Sigmoid colon (tissue), 7 donors: ENCODE measurements at regions of chr2 and their contacts with region 1.

Region 1: GRCh38 chr2:66699793-66700676 is 265.1 kb downstream of the MEIS1 start:
- DNase-seq: no peak
- H3K4me3 ChIP-seq: no peak overlapping the region
- H3K27ac ChIP-seq: peak overlapping the region; percentile 76 to 91 (median 85)
- H3K4me1 ChIP-seq: peaks cover 3 to 74% (median 65%) of the 10 kb centered on the region in 4 donors
- H3K27me3 ChIP-seq: no peaks in the 10 kb centered on the region
- CTCF ChIP-seq: no peak
- EP300 ChIP-seq: no peak
- POLR2A ChIP-seq: no peak

Region 2: DNA sequence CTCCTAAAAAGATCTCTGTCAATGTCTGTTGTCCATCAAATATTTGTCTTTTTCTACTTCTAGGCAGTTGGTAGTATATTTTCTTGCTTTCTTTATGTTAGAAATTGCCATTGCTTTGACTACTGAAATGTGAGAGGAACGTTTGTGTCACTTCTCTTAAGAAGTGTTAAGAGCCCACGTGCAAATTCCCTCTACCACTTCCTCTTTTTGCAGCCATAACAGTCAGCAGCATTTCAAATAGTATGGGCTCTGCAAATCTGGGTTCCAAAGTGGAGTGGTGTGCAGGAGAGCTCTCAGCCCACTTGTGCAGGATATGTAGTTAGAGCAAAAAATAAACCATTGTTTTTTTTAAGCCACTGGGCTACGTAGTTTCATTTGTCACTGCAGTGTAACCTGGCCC is 48.9 kb after region 1 on chr2:
- intact Hi-C with region 1: loop called (anchors 5 kb)
- DNase-seq: no peak
- H3K4me3 ChIP-seq: no peak overlapping the region
- H3K27ac ChIP-seq: peak overlapping the region in 3 of 4 donors; percentile 62 to 80 (median 69)
- H3K4me1 ChIP-seq: peaks cover 0 to 56% (median 27%) of the 10 kb centered on the region in 4 donors
- H3K27me3 ChIP-seq: no peaks in the 10 kb centered on the region
- CTCF ChIP-seq: no peak
- EP300 ChIP-seq: no peak
- POLR2A ChIP-seq: no peak

Region 3: GRCh38 chr2:66790651-66791181 is 90.7 kb after region 1 on chr2:
- intact Hi-C with region 1: loop called (anchors 5 kb)
- DNase-seq: peak; percentile 76
- H3K4me3 ChIP-seq: no peak overlapping the region
- H3K27ac ChIP-seq: peak overlapping the region; percentile 44 to 77 (median 68)
- H3K4me1 ChIP-seq: peaks cover 0 to 63% (median 49%) of the 10 kb centered on the region in 4 donors
- H3K27me3 ChIP-seq: no peaks in the 10 kb centered on the region
- CTCF ChIP-seq: no peak
- EP300 ChIP-seq: peak in 1 of 4 donors; percentile 19
- POLR2A ChIP-seq: no peak

Region 4: GRCh38 chr2:66851449-66851872 is 151.4 kb after region 1 on chr2:
- intact Hi-C with region 1: loop called (anchors 5 kb)
- DNase-seq: peak; percentile 81
- H3K4me3 ChIP-seq: no peak overlapping the region
- H3K27ac ChIP-seq: peak overlapping the region in 3 of 4 donors; percentile 87 to 91 (median 89)
- H3K4me1 ChIP-seq: peaks cover 0 to 64% (median 58%) of the 10 kb centered on the region in 4 donors
- H3K27me3 ChIP-seq: no peaks in the 10 kb centered on the region
- CTCF ChIP-seq: no peak
- EP300 ChIP-seq: peak in 1 of 4 donors; percentile 50
- POLR2A ChIP-seq: no peak

Region 5: DNA sequence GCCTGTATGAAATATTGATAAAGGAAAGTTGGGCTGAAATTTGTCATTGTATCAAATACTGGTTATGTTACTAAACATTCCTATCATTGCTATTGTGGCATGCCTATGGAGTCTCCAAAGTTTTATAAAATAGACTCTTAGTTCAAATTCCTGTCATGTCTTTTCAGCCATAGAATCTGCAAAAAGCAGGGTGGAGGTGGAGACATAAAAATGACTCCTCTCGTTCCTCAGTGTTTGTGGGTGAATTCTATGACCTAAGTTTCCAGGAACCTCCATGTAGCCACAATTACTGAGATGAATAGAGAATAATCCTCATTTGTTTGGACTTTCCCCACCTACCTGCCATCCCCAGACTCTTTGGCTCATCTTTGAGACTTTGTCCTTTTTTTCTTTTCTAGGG is 370.8 kb after region 1 on chr2:
- intact Hi-C with region 1: loop called (anchors 10 kb)
- DNase-seq: no peak
- H3K4me3 ChIP-seq: no peak overlapping the region
- H3K27ac ChIP-seq: no peak overlapping the region
- H3K4me1 ChIP-seq: peaks cover 0 to 20% (median 7%) of the 10 kb centered on the region in 4 donors
- H3K27me3 ChIP-seq: no peaks in the 10 kb centered on the region
- CTCF ChIP-seq: no peak
- EP300 ChIP-seq: no peak
- POLR2A ChIP-seq: no peak

Region 6: GRCh38 chr2:67840460-67841068 is 1140.5 kb after region 1 on chr2:
- intact Hi-C with region 1: loop called (anchors 10 kb)
- DNase-seq: peak; percentile 85
- H3K4me3 ChIP-seq: no peak overlapping the region
- H3K27ac ChIP-seq: peak overlapping the region in 1 of 4 donors; percentile 29
- H3K4me1 ChIP-seq: peaks cover 0 to 18% (median 1%) of the 10 kb centered on the region in 4 donors
- H3K27me3 ChIP-seq: no peaks in the 10 kb centered on the region
- CTCF ChIP-seq: peak; percentile 59 to 84 (median 79)
- EP300 ChIP-seq: no peak
- POLR2A ChIP-seq: no peak